Gastrocnemius medialis (tissue), 4 donors: ENCODE measurements at regions of chr4 and their contacts with region 1.

Region 1: DNA sequence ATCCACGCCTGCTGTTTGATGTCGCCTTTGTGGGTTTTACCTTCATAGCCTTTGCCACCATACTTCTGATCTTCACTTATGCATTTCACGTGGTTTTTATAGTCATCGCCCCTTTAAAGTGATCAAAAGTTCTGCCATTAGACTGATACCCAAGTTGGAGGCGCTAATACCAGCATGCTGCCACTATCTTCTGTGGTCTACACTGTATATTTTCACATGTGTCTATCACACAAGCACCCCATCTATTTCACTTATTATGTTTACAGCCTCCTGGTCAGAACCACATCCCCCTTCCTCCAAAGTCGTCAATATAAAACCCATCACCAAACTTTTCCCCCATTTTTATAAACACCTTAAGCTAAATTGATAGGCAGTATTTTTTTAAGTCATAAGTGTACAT is 8.2 kb downstream of the LYAR start:
- DNase-seq: no peak
- ATAC-seq: no peak
- H3K4me3 ChIP-seq: no peak overlapping the region
- H3K27ac ChIP-seq: no peak overlapping the region
- H3K4me1 ChIP-seq: peaks cover 0 to 29% of the 10 kb centered on the region in 2 donors
- H3K27me3 ChIP-seq: no peaks in the 10 kb centered on the region
- CTCF ChIP-seq: no peak
- POLR2A ChIP-seq: no peak

Region 2: GRCh38 chr4:4302416-4302815 is 20.6 kb after region 1 on chr4:
- in situ Hi-C with region 1: no loop called
- intact Hi-C with region 1: loop called (anchors 1 kb)
- DNase-seq: no peak
- ATAC-seq: no peak
- H3K4me3 ChIP-seq: no peak overlapping the region
- H3K27ac ChIP-seq: peak overlapping the region in 1 of 4 donors; percentile 15
- H3K4me1 ChIP-seq: no peaks in the 10 kb centered on the region
- H3K27me3 ChIP-seq: no peaks in the 10 kb centered on the region
- CTCF ChIP-seq: no peak
- POLR2A ChIP-seq: no peak

Region 3: GRCh38 chr4:5452156-5452555 is 1170.4 kb after region 1 on chr4:
- in situ Hi-C with region 1: no loop called
- intact Hi-C with region 1: no loop called
- DNase-seq: no peak
- ATAC-seq: no peak
- H3K4me3 ChIP-seq: no peak overlapping the region
- H3K27ac ChIP-seq: no peak overlapping the region
- H3K4me1 ChIP-seq: no peaks in the 10 kb centered on the region
- H3K27me3 ChIP-seq: no peaks in the 10 kb centered on the region
- CTCF ChIP-seq: no peak
- POLR2A ChIP-seq: no peak